ENCODE measurements at regions of chr22 and their contacts with region 1.

Region 1: DNA sequence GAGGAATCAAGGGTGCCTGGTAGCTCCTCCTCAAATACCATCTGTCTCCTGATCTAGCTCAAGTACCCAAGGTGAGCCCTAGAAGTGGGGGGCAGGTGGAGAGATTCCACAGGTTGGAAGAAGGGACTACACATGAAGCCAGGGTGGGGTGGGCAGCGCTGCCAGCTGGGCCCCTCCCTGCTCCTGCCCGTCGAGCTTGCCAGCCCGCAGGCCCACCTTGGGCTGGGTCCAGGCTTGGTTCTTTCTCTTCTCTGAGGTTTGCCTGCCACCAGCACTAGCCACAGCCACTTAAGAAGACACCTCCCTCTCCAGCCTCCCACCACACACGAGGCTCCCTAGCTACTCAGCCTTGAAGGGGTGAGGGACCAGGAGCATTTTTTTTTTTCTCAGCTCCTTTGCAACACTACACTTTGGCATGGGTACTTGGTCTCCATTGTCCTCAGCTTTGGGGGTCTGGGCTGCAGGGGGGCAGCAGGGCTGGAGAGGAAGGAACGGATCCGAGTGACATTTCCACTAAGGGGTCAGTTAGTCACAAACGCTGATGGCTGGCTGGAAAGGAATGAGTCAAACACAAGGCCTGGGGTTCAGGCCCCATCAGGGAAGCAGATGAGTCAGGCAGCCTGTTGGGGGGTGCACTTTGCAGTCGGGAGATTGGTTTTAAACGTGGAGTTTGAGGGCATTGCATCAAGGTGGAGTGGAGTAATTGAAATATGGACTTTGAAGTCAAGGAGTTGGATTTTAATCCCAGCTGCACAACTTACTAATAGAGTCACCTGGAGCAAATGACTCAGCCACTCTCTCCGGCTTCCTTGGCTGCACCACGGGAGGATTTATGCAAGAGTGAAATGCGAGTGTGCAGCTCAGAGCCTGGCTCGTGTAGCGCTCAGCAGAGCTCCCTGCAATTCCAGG is 7.4 kb upstream of the NPTXR start:
- H3K4me3 Mint-ChIP-seq: no peak overlapping the region
- H3K27ac Mint-ChIP-seq: no peak overlapping the region
- H3K4me1 Mint-ChIP-seq: no peaks in the 10 kb centered on the region
- H3K27me3 Mint-ChIP-seq: peaks cover 56% of the 10 kb centered on the region

Region 2: GRCh38 chr22:38777087-38777671 is 74.0 kb before region 1 on chr22:
- intact Hi-C with region 1: loop called (anchors 10 kb)
- H3K4me3 Mint-ChIP-seq: no peak overlapping the region
- H3K27ac Mint-ChIP-seq: no peak overlapping the region
- H3K4me1 Mint-ChIP-seq: peaks cover 12% of the 10 kb centered on the region
- H3K27me3 Mint-ChIP-seq: no peaks in the 10 kb centered on the region